ENCODE measurements at regions of chr4 and their contacts with region 1.

Region 1: GRCh38 chr4:86921608-86922252 is 13.1 kb upstream of the AFF1 start:
- DNase-seq: no peak
- ATAC-seq: no peak
- H3K4me3 ChIP-seq: no peak overlapping the region
- H3K27ac ChIP-seq: no peak overlapping the region
- H3K4me1 ChIP-seq: peaks cover 7 to 25% of the 10 kb centered on the region in 2 experiments
- H3K27me3 ChIP-seq: no peaks in the 10 kb centered on the region
- CTCF ChIP-seq: no peak
- POLR2A ChIP-seq: no peak
- RAD21 ChIP-seq: no peak

Region 2: GRCh38 chr4:86910820-86911684 is 10.7 kb before region 1 on chr4:
- CTCF ChIA-PET with region 1: interaction called, 13 read pairs
- POLR2A ChIA-PET with region 1: no interaction called
- RAD21 ChIA-PET with region 1: no interaction called
- intact Hi-C with region 1: no loop called
- DNase-seq: no peak
- ATAC-seq: no peak
- H3K4me3 ChIP-seq: no peak overlapping the region
- H3K27ac ChIP-seq: no peak overlapping the region
- H3K4me1 ChIP-seq: no peaks in the 10 kb centered on the region
- H3K27me3 ChIP-seq: no peaks in the 10 kb centered on the region
- CTCF ChIP-seq: no peak
- POLR2A ChIP-seq: no peak
- RAD21 ChIP-seq: no peak

Region 3: GRCh38 chr4:87006676-87007527 is 85.2 kb after region 1 on chr4:
- CTCF ChIA-PET with region 1: interaction called, 7 read pairs
- POLR2A ChIA-PET with region 1: interaction called, 7 read pairs
- RAD21 ChIA-PET with region 1: interaction called in 1 of 2 experiments, 5 read pairs
- intact Hi-C with region 1: loop called (anchors 1 kb)
- DNase-seq: peak; percentile 86
- ATAC-seq: peak; percentile 91
- H3K4me3 ChIP-seq: peak overlapping the region; percentile 63 to 94
- H3K27ac ChIP-seq: peak overlapping the region; percentile 90
- H3K4me1 ChIP-seq: peaks cover 23 to 40% of the 10 kb centered on the region in 2 experiments
- H3K27me3 ChIP-seq: no peaks in the 10 kb centered on the region
- CTCF ChIP-seq: peak in 1 of 3 experiments; percentile 36; a peak in 3 of 6 replicates
- POLR2A ChIP-seq: peak; percentile 98
- RAD21 ChIP-seq: peak; percentile 37

Region 4: DNA sequence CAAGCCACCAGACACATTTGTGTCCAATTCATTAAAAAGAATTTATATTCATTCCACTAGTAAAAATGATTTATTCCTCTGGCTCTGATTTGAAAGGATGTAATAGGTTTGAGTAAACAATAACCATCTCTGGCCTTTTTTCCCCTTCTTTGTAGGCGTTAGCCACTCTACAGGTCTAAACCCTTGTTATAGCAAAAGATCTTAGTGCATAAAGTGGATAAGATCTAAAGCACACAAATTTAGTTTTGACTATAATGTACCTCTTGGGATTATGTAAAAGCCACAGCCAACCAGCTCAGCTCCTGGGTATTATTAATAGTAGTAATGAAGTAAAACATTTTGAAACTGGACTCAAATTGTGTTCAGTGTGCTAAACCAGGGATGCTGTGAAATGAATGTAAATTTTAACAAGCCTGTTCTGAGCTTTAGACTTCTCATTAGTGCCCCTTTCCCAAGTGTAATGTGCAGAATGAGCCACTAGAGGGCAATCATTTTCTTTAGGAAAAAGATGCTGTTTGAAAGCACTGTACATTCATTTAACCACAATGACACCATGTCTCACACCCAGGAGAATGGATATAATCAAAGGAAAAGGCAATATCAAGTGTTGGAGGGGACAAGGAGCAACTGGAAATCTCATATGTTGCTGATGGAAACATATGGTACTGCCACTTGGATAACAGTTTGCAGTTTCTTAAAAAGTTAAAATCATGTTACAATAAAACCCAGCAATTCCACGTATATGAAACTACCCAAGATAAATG is 228.9 kb after region 1 on chr4:
- CTCF ChIA-PET with region 1: interaction called, 31 read pairs
- POLR2A ChIA-PET with region 1: no interaction called
- RAD21 ChIA-PET with region 1: interaction called, 5 read pairs
- intact Hi-C with region 1: no loop called
- DNase-seq: peak; percentile 55
- ATAC-seq: peak; percentile 85
- H3K4me3 ChIP-seq: no peak overlapping the region
- H3K27ac ChIP-seq: no peak overlapping the region
- H3K4me1 ChIP-seq: no peaks in the 10 kb centered on the region
- H3K27me3 ChIP-seq: no peaks in the 10 kb centered on the region
- CTCF ChIP-seq: peak; percentile 73 to 95 (median 84)
- POLR2A ChIP-seq: no peak
- RAD21 ChIP-seq: peak; percentile 83